Panc1 (cell line): ENCODE measurements at regions of chr1 and their contacts with region 1.

Region 1: DNA sequence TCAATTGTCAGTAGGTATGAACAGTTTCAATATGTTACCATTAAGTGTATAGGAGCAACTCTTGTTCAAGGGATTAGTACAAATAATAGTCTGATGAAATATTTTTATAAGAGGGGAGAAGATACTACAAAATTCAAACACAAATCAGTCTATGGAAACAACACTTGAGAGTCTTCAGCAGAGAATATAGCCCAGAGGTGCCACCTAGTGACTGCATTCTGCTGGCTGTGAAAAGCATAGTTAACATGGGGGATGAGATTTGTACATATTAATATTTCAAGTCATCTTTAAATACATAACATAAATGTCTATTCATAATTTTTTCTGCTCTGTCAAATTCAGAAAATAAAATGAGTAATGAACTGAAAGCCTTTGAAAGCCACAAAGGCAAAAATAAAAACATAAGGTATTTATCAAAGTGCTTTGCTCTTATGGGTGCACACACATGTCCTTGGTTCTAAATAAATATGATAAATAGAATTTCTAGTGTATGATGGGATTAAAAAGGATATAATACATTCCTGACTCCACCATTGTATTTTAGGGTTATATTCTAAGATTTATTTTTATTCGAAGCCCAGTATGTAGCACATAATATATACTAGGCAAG is 440.9 kb upstream of the ZRANB2 start:
- DNase-seq: peak; percentile 13
- ATAC-seq: peak; percentile 63; the same call in 1 of the 2 replicates
- H3K4me3 ChIP-seq: no peak overlapping the region
- H3K27ac ChIP-seq: no peak overlapping the region
- H3K4me1 ChIP-seq: no peaks in the 10 kb centered on the region
- H3K27me3 ChIP-seq: no peaks in the 10 kb centered on the region
- CTCF ChIP-seq: peak; percentile 64; the same call in 1 of the 2 replicates

Region 2: GRCh38 chr1:71093938-71094337 is 427.8 kb before region 1 on chr1:
- CTCF ChIA-PET with region 1: no interaction called
- POLR2A ChIA-PET with region 1: no interaction called
- in situ Hi-C with region 1: no loop called
- intact Hi-C with region 1: loop called (anchors 5 kb)
- DNase-seq: no peak
- ATAC-seq: no peak
- H3K4me3 ChIP-seq: no peak overlapping the region
- H3K27ac ChIP-seq: no peak overlapping the region
- H3K4me1 ChIP-seq: no peaks in the 10 kb centered on the region
- H3K27me3 ChIP-seq: no peaks in the 10 kb centered on the region
- CTCF ChIP-seq: peak; percentile 52; the same call in 1 of the 2 replicates

Region 3: GRCh38 chr1:71196685-71197084 is 325.1 kb before region 1 on chr1:
- CTCF ChIA-PET with region 1: no interaction called
- POLR2A ChIA-PET with region 1: no interaction called
- in situ Hi-C with region 1: no loop called
- intact Hi-C with region 1: loop called (anchors 5 kb)
- DNase-seq: no peak
- ATAC-seq: no peak
- H3K4me3 ChIP-seq: no peak overlapping the region
- H3K27ac ChIP-seq: no peak overlapping the region
- H3K4me1 ChIP-seq: no peaks in the 10 kb centered on the region
- H3K27me3 ChIP-seq: no peaks in the 10 kb centered on the region
- CTCF ChIP-seq: peak; percentile 15; the same call in 1 of the 2 replicates